OCI-LY7 (cell line): ENCODE measurements at regions of chr16 and their contacts with region 1.

Region 1: GRCh38 chr16:85245307-85246172 is 133.3 kb upstream of the CIBAR2 start:
- DNase-seq: peak; percentile 78
- H3K4me3 ChIP-seq: no peak overlapping the region
- H3K27ac ChIP-seq: no peak overlapping the region
- H3K4me1 ChIP-seq: no peaks in the 10 kb centered on the region
- CTCF ChIP-seq: peak; percentile 98

Region 2: DNA sequence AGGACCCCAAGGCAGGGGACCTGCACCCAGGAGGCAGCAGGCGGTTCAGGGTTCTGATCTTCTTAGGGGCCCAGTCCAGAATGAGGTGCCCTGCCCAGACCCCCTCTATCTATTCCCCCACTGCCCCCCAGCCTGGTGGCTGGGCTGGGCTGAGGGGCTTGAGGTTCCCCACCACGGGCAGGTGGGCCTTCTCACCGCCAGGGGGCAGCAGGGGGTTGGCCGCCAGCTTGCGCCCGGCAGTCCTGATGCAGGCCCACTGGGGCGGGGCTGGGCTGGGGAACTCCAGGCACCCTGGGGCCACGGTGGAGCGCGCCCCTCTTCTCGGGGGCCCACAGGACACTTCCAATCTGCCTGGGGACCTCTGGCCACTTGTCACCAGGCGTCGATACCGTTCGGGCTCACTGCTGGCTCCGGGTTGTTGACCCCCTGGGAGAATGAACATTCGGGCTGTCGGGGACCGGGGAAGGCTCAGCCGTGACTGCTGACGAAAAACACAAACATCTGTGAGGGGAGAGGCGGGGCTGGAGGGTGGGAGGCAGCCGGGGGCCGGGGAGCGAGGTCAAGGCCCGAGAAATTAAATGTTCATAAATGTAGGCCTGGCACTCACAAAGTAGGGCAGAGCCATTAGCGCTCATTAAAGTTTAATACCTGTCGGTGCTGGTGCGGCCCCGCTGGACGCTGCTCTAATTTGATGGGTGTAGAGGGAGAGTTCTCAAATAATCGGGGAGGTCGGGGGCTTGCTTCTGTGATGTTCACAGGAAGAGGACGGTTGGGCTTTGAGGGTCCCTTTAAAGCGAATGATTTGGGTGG is 148.3 kb after region 1 on chr16:
- CTCF ChIA-PET with region 1: no interaction called
- POLR2A ChIA-PET with region 1: interaction called, 4 read pairs
- intact Hi-C with region 1: loop called (anchors 10 kb)
- DNase-seq: peak; percentile 73
- H3K4me3 ChIP-seq: no peak overlapping the region
- H3K27ac ChIP-seq: no peak overlapping the region
- H3K4me1 ChIP-seq: peaks cover 13% of the 10 kb centered on the region
- CTCF ChIP-seq: peak; percentile 89